ENCODE measurements at regions of chr7 and their contacts with region 1.

Region 1: DNA sequence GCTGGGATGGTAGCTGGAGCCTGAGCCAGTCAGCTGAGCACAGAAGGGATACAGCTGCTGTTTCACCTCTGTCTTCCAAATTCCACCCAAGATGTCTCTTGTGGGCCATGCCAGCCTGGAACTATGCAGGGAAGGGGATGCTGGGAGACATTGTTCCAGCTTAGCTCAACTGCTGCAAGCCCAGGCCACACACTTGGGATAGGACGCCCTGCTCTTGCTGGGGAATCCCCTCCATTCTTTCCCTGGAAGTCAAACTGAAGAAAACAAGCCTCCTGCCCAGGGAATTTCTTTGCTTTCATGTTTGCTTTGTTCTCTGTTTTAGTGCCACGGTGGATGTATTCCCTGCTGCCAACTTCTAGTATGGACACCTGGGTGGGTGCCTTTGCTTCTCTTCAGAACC is 55.2 kb upstream of the CDK13 start:
- DNase-seq: no peak
- ATAC-seq: no peak
- H3K4me3 ChIP-seq: no peak overlapping the region
- H3K27ac ChIP-seq: no peak overlapping the region
- H3K4me1 ChIP-seq: 0 out of 2 replicates have a peak, but pooled peaks cover 4% of the 10 kb centered on the region
- H3K27me3 ChIP-seq: peaks cover 0 to 9% of the 10 kb centered on the region in 2 experiments; a peak in 2 of 5 replicates
- CTCF ChIP-seq: no peak
- EP300 ChIP-seq: no peak
- POLR2A ChIP-seq: no peak
- RAD21 ChIP-seq: no peak

Region 2: GRCh38 chr7:40015790-40016296 is 120.9 kb after region 1 on chr7:
- CTCF ChIA-PET with region 1: no interaction called
- POLR2A ChIA-PET with region 1: no interaction called
- in situ Hi-C with region 1: no loop called
- intact Hi-C with region 1: loop called (anchors 1 kb)
- DNase-seq: peak; percentile 14
- ATAC-seq: peak; percentile 49; the same call in 2 of the 3 replicates
- H3K4me3 ChIP-seq: no peak overlapping the region
- H3K27ac ChIP-seq: no peak overlapping the region
- H3K4me1 ChIP-seq: peaks cover 16% of the 10 kb centered on the region
- H3K27me3 ChIP-seq: no peaks in the 10 kb centered on the region
- CTCF ChIP-seq: no peak
- EP300 ChIP-seq: no peak
- POLR2A ChIP-seq: no peak
- RAD21 ChIP-seq: no peak

Region 3: DNA sequence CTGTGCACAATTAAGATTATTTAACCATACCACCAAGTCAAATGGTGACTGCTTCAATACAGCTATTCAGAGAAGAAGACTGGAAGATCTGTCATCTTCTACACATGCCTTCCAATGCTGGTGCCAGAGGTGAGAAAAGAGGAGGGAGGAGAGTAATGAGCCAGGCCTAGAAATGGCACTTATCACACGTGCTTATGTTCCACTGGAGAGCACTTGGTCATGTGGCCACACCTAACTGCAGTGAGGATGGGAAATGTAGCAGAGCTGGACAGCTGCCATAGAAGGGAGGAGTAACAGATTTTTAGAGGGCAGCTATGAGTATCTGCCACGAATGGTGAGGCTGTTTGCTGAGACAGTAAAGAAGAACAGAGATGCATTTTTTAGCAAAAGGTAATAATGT is 162.4 kb after region 1 on chr7:
- CTCF ChIA-PET with region 1: interaction called, 32 read pairs
- POLR2A ChIA-PET with region 1: interaction called, 5 read pairs
- in situ Hi-C with region 1: loop called (anchors 5 kb)
- intact Hi-C with region 1: loop called (anchors 1 kb)
- DNase-seq: no peak
- ATAC-seq: no peak
- H3K4me3 ChIP-seq: no peak overlapping the region
- H3K27ac ChIP-seq: no peak overlapping the region
- H3K4me1 ChIP-seq: no peaks in the 10 kb centered on the region
- H3K27me3 ChIP-seq: no peaks in the 10 kb centered on the region
- CTCF ChIP-seq: no peak
- EP300 ChIP-seq: no peak
- POLR2A ChIP-seq: no peak
- RAD21 ChIP-seq: no peak

Region 4: GRCh38 chr7:40138973-40139372 is 244.1 kb after region 1 on chr7:
- CTCF ChIA-PET with region 1: no interaction called
- POLR2A ChIA-PET with region 1: no interaction called
- in situ Hi-C with region 1: no loop called
- intact Hi-C with region 1: no loop called
- DNase-seq: no peak
- ATAC-seq: no peak
- H3K4me3 ChIP-seq: no peak overlapping the region
- H3K27ac ChIP-seq: no peak overlapping the region
- H3K4me1 ChIP-seq: peaks cover 14% of the 10 kb centered on the region
- H3K27me3 ChIP-seq: no peaks in the 10 kb centered on the region; a peak in 1 of 5 replicates
- CTCF ChIP-seq: no peak
- EP300 ChIP-seq: no peak
- POLR2A ChIP-seq: no peak
- RAD21 ChIP-seq: no peak

Region 5: GRCh38 chr7:40200791-40201190 is 305.9 kb after region 1 on chr7:
- CTCF ChIA-PET with region 1: no interaction called
- POLR2A ChIA-PET with region 1: no interaction called
- in situ Hi-C with region 1: no loop called
- intact Hi-C with region 1: no loop called
- DNase-seq: no peak
- ATAC-seq: no peak
- H3K4me3 ChIP-seq: no peak overlapping the region
- H3K27ac ChIP-seq: no peak overlapping the region
- H3K4me1 ChIP-seq: no peaks in the 10 kb centered on the region
- H3K27me3 ChIP-seq: no peaks in the 10 kb centered on the region
- CTCF ChIP-seq: no peak
- EP300 ChIP-seq: no peak
- POLR2A ChIP-seq: no peak
- RAD21 ChIP-seq: no peak

Region 6: GRCh38 chr7:40850017-40850416 is 955.1 kb after region 1 on chr7:
- CTCF ChIA-PET with region 1: no interaction called
- POLR2A ChIA-PET with region 1: no interaction called
- in situ Hi-C with region 1: no loop called
- intact Hi-C with region 1: no loop called
- DNase-seq: no peak
- ATAC-seq: no peak
- H3K4me3 ChIP-seq: no peak overlapping the region
- H3K27ac ChIP-seq: no peak overlapping the region
- H3K4me1 ChIP-seq: no peaks in the 10 kb centered on the region
- H3K27me3 ChIP-seq: no peaks in the 10 kb centered on the region
- CTCF ChIP-seq: no peak
- EP300 ChIP-seq: no peak
- POLR2A ChIP-seq: no peak
- RAD21 ChIP-seq: no peak

Measured in HepG2 (cell line).